Body of pancreas (tissue), 4 donors: ENCODE measurements at regions of chr20 and their contacts with region 1.

Region 1: GRCh38 chr20:50992733-50993457 is 30.0 kb downstream of the KCNG1 start:
- DNase-seq: peak in 1 of 4 donors; percentile 20
- ATAC-seq: peak; percentile 48
- H3K4me3 ChIP-seq: no peak overlapping the region
- H3K27ac ChIP-seq: no peak overlapping the region
- H3K4me1 ChIP-seq: no peaks in the 10 kb centered on the region
- H3K27me3 ChIP-seq: no peaks in the 10 kb centered on the region
- CTCF ChIP-seq: peak in 6 of 7 experiments; percentile 16 to 49 (median 34)
- POLR2A ChIP-seq: no peak

Region 2: GRCh38 chr20:51306503-51307358 is 313.8 kb after region 1 on chr20:
- intact Hi-C with region 1: loop called (anchors 5 kb)
- DNase-seq: peak; percentile 73 to 79 (median 76)
- ATAC-seq: peak; percentile 92
- H3K4me3 ChIP-seq: no peak overlapping the region
- H3K27ac ChIP-seq: no peak overlapping the region
- H3K4me1 ChIP-seq: peaks cover 6% of the 10 kb centered on the region
- H3K27me3 ChIP-seq: no peaks in the 10 kb centered on the region
- CTCF ChIP-seq: peak; percentile 79 to 93 (median 85)
- POLR2A ChIP-seq: no peak